ENCODE measurements at regions of chr4 and their contacts with region 1.

Region 1: DNA sequence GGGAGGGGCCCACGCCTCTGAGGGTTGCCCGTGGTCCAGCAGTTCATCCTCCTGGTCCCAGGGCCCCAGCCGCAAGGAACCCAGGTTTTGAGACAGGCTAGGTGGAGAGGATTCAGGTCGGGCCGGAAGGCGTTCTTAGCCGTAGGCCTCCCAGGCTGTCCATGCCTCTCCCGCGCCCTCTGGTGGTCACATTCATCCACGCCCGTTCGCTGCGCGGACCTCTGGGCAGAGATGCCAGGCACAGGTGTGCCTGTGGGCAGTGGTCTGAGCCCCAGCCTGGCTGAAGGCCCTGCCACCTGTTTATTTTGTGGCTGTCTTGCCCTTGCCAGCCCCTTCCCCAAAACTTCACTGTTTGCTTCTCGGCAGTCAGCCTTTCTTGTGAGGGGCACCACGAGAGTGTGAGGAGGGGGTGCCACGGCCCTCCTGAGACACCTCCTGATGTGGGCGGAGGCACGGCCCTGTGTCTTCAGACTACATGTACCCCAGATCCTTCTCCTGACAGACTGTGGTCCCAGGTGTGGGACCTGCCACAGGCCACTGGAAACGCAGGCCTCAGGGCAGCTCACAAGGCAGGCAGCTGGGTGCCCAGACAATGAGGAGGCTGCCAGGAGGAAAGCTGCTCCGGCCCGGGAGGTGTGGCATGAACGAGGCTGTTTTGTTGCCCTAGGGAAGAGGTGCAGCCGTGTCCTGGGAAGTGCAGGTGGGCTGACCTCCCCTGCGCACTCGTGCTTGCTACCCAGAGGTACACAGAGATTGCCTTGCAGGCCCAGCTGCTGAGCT is 5.0 kb downstream of the UVSSA start:
- DNase-seq: peak; percentile 51 to 99
- H3K4me3 ChIP-seq: no peak overlapping the region
- H3K27ac ChIP-seq: no peak overlapping the region
- H3K4me1 ChIP-seq: peaks cover 0 to 6% (median 2%) of the 10 kb centered on the region in 4 experiments; a peak in 2 of 7 replicates
- H3K27me3 ChIP-seq: no peaks in the 10 kb centered on the region
- CTCF ChIP-seq: peak in 2 of 3 experiments; percentile 88 to 98; a peak in 3 of 4 replicates
- EP300 ChIP-seq: no peak
- POLR2A ChIP-seq: no peak
- RAD21 ChIP-seq: peak; percentile 66 to 78

Region 2: DNA sequence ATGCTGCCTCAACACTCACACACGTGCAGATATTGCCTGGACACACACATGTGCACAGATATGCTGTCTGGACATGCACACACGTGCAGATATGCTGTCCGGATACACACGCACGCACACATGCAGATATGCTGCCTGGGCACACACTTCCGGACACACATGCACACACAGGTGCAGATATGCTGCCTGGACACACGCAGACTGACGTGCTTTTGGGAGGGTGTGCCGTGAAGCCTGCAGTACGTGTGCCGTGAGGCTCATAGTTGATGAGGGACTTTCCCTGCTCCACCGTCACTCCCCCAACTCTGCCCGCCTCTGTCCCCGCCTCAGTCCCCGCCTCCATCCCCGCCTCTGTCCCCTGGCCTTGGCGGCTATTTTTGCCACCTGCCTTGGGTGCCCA is 325.9 kb before region 1 on chr4:
- CTCF ChIA-PET with region 1: no interaction called
- POLR2A ChIA-PET with region 1: no interaction called
- DNase-seq: no peak
- H3K4me3 ChIP-seq: peak overlapping the region in 1 of 4 experiments; percentile 8; a peak in 1 of 8 replicates
- H3K27ac ChIP-seq: no peak overlapping the region
- H3K4me1 ChIP-seq: peaks cover 0 to 14% (median 4%) of the 10 kb centered on the region in 4 experiments; a peak in 4 of 7 replicates
- H3K27me3 ChIP-seq: 0 out of 7 replicates have a peak, but pooled peaks cover 0 to 5% (median 0%) of the 10 kb centered on the region in 4 experiments
- CTCF ChIP-seq: no peak
- EP300 ChIP-seq: no peak
- POLR2A ChIP-seq: no peak
- RAD21 ChIP-seq: no peak

Region 3: DNA sequence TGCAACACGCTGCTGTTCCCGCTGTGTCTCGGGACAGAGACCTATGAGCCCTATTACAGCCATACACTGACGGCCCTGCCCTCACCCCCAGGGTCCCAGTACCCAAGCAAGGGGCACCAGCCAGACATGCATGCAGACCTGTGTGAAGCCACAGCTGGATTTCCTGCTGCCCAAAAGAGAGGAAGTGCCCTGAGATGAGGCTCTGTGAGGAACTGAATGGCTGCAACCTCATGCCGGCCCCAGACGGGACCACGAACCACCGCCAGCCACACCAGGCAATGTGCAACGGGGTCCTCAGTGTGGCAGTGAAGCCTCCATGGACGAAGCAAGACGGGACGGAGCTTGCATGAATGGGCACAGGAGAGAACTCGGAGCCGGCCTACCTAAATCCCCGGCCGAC is 124.2 kb before region 1 on chr4:
- CTCF ChIA-PET with region 1: no interaction called
- POLR2A ChIA-PET with region 1: no interaction called
- DNase-seq: no peak
- H3K4me3 ChIP-seq: no peak overlapping the region
- H3K27ac ChIP-seq: no peak overlapping the region
- H3K4me1 ChIP-seq: no peaks in the 10 kb centered on the region
- H3K27me3 ChIP-seq: no peaks in the 10 kb centered on the region
- CTCF ChIP-seq: no peak
- EP300 ChIP-seq: no peak
- POLR2A ChIP-seq: no peak
- RAD21 ChIP-seq: no peak

Region 4: DNA sequence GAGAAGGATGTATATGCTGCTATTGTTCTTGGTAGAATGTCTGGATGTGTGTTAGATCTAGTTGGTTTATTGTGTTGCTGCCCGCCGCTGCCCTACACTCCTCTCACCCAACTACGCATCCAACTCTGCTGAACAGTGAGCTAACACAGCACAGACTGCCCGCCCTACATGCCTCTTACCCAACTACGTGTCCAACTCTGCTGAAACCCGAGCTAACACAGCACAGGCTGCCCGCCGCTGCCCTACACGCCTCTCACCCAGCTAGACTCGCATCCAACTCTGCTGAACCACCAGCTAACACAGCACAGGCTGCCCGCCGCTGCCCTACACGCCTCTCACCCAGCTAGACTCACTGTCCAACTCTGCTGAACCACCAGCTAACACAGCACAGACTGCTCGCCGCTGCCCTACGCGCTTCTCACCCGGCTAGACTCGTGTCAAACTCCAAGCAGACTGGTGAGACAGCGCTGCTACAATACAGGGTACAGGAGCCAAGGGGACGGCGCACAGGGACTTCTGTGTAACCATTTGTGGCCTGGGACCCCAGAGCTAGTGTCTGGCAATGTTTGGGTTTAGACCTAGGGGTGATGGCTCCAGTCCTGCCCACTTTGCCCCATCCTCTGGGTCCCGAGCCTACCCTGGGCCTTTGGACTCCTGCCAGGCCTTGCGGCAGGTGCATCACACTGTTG is 91.5 kb before region 1 on chr4:
- CTCF ChIA-PET with region 1: no interaction called
- POLR2A ChIA-PET with region 1: no interaction called
- DNase-seq: no peak
- H3K4me3 ChIP-seq: no peak overlapping the region
- H3K27ac ChIP-seq: no peak overlapping the region
- H3K4me1 ChIP-seq: peaks cover 0 to 2% (median 0%) of the 10 kb centered on the region in 4 experiments; a peak in 1 of 7 replicates
- H3K27me3 ChIP-seq: no peaks in the 10 kb centered on the region; a peak in 1 of 7 replicates
- CTCF ChIP-seq: no peak
- EP300 ChIP-seq: no peak
- POLR2A ChIP-seq: no peak
- RAD21 ChIP-seq: no peak

Region 5: DNA sequence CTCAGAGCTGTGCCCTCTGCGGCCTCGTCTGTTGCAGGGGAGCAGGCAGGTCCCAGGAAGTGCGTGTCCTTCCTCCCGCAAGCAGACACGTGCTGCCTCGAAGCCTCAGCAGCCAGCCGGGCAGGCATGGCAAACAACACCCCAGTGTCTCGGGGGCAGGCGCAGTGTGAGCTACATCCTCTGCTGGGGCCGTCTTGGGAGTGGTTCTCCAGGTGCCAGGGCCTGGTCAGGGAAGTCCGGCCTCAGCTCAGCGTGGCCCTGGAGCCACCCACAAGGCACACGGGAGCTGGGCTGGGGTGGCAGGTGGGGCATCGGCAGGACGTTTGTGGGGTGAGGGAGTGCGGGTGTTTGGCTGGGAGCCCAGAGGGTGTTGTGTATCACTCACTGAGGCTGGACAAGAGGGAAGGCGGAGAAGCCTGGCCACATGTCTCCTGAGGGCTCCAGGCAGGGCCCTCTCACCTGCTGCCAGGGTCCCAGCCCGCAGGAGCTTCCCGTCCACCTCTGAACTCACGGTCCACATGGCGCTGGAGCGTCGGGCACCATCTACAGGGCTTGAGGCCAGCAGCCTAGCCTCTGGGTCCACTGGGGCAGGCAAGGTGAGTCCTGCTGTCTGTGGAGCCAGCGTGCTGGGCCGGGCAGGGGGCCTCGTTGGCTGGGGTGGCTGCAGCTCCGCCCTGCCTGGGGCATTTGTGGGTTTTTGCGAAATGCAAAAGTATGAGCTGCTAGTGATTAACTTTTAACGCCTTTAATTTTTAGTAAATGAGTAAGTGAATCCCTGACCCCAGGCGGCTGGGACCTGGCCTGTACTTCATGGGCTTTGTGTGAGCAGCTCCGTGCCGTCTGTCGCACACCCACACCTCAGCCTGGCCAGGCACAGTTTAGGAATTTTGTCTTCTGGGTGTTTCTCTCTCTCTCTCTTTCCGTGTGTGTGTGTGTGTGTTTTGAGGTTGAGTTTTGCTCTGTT is 22.4 kb before region 1 on chr4:
- CTCF ChIA-PET with region 1: interaction called, 11 read pairs
- POLR2A ChIA-PET with region 1: interaction called, 5 read pairs
- DNase-seq: no peak
- H3K4me3 ChIP-seq: no peak overlapping the region
- H3K27ac ChIP-seq: no peak overlapping the region
- H3K4me1 ChIP-seq: no peaks in the 10 kb centered on the region
- H3K27me3 ChIP-seq: no peaks in the 10 kb centered on the region
- CTCF ChIP-seq: no peak
- EP300 ChIP-seq: no peak
- POLR2A ChIP-seq: no peak
- RAD21 ChIP-seq: no peak

Region 6: DNA sequence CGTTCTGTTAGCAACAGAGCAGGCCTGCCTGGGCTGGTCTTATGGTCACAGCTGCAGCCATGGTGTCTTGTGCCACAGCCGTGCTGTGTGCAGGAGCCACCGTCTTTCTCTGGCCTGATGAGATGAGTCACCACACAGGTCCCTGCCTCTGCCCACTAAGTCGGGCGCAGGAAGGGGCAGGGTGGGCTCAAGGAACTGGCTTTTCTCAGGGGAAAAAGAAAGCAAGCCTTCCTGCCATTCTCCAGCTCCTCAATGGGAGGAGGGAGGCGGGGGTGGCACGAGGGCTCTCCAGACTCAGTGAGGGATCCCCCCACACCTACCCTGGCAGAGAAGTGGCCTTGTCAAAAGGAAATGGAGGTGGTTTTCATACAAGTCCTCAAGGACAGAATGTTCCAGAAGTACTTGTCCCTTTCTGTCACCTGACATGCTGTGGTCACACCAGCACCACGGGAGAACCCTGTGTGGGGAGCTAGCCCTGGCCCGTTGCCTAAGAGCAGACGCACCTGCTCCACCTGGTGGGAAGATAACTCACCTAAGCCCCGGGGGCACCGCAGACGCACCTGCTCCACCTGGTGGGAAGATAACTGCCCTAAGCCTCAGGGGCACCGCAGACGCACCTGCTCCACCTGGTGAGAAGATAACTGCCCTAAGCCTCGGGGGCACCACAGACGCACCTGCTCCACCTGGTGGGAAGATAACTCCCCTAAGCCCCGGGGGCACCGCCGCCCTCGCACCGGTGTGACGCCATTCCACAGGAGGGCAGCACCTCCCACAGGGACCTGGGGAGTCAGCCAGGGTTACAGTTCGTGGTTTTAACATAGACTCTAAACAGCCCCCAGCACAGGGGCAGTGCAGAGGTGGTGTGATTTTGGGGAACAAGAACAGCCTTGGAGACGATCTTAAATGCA is 13.5 kb after region 1 on chr4:
- CTCF ChIA-PET with region 1: interaction called, 58 read pairs
- POLR2A ChIA-PET with region 1: interaction called, 4 read pairs
- DNase-seq: no peak
- H3K4me3 ChIP-seq: no peak overlapping the region
- H3K27ac ChIP-seq: no peak overlapping the region
- H3K4me1 ChIP-seq: peaks cover 0 to 2% (median 0%) of the 10 kb centered on the region in 4 experiments; a peak in 1 of 7 replicates
- H3K27me3 ChIP-seq: no peaks in the 10 kb centered on the region
- CTCF ChIP-seq: peak in 2 of 3 experiments; percentile 46 to 59; a peak in 3 of 4 replicates
- EP300 ChIP-seq: no peak
- POLR2A ChIP-seq: no peak
- RAD21 ChIP-seq: peak; percentile 12 to 32; a peak in 3 of 4 replicates

Region 7: GRCh38 chr4:1377226-1377605 is 25.2 kb after region 1 on chr4:
- CTCF ChIA-PET with region 1: interaction called, 15 read pairs
- POLR2A ChIA-PET with region 1: interaction called, 3 read pairs
- DNase-seq: no peak
- H3K4me3 ChIP-seq: no peak overlapping the region
- H3K27ac ChIP-seq: no peak overlapping the region
- H3K4me1 ChIP-seq: no peaks in the 10 kb centered on the region; a peak in 1 of 7 replicates
- H3K27me3 ChIP-seq: no peaks in the 10 kb centered on the region
- CTCF ChIP-seq: peak in 1 of 3 experiments; percentile 31; a peak in 2 of 4 replicates
- EP300 ChIP-seq: no peak
- POLR2A ChIP-seq: no peak
- RAD21 ChIP-seq: peak; percentile 43

Region 8: GRCh38 chr4:1401409-1402020 is 49.5 kb after region 1 on chr4:
- CTCF ChIA-PET with region 1: interaction called, 14 read pairs
- POLR2A ChIA-PET with region 1: no interaction called
- DNase-seq: no peak
- H3K4me3 ChIP-seq: no peak overlapping the region
- H3K27ac ChIP-seq: no peak overlapping the region
- H3K4me1 ChIP-seq: peaks cover 0 to 22% (median 3%) of the 10 kb centered on the region in 4 experiments; a peak in 5 of 7 replicates
- H3K27me3 ChIP-seq: peaks cover 59 to 66% (median 63%) of the 10 kb centered on the region in 4 experiments
- CTCF ChIP-seq: peak in 1 of 3 experiments; percentile 4; a peak in 2 of 4 replicates
- EP300 ChIP-seq: no peak
- POLR2A ChIP-seq: no peak
- RAD21 ChIP-seq: 0 out of 4 replicates have a peak, but pooled peaks of 1 of the 2 experiments have one; percentile 3

Region 9: DNA sequence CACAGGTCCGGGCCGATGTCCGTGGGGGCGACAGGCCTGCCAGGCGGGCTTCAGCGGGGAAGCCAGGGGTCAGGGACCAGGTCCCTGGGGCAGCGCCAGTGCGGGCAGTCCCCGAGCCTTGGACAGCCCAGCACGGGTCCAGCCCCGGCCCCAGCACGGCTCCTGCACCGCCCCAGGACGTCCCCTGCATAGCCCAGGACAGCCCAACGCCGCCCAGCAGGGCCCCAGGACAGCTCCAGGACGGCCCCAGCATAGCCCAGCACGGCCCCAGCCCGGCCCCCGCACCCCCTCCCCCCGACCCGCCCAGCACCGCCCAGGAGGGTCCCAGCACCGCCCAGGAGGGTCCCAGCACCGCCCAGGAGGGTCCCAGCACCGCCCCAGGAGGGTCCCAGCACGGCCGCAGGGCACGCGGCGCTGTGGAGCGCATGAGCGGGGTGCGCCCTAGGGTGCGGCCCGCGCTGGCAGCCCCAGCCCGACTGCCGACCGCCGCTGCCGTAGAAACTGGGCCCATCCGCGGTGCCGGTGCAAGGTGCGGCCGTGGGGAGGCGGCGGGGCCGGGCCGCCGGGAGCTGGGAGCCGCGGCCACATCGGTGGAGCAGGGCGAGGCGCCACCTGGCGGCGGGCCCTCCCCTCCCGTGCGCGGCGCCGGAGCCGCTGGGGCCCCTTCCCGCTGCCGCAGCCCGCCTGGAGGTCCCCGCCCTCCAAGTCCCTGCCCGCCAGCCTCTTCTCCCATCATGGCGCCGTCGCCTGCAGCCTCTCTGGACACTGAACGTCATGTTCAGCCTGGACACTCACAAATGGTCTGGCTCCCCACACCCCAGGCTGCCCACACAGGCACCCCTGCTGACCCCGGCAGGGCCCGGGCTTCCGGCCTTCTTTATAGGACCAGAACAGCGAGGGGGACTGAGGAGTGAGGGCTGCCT is 161.0 kb after region 1 on chr4:
- CTCF ChIA-PET with region 1: interaction called, 11 read pairs
- POLR2A ChIA-PET with region 1: no interaction called
- DNase-seq: peak in 1 of 2 experiments; percentile 88
- H3K4me3 ChIP-seq: peak overlapping the region; percentile 20 to 55 (median 28); a peak in 6 of 8 replicates
- H3K27ac ChIP-seq: no peak overlapping the region
- H3K4me1 ChIP-seq: peaks cover 0 to 4% (median 3%) of the 10 kb centered on the region in 4 experiments; a peak in 2 of 7 replicates
- H3K27me3 ChIP-seq: peaks cover 0 to 2% (median 0%) of the 10 kb centered on the region in 4 experiments; a peak in 1 of 7 replicates
- CTCF ChIP-seq: peak in 2 of 3 experiments; percentile 73 to 90; a peak in 3 of 4 replicates
- EP300 ChIP-seq: peak in 1 of 2 experiments; percentile 42; a peak in 1 of 3 replicates
- POLR2A ChIP-seq: no peak
- RAD21 ChIP-seq: peak; percentile 52 to 79

Region 10: GRCh38 chr4:1910643-1911042 is 558.6 kb after region 1 on chr4:
- CTCF ChIA-PET with region 1: no interaction called
- POLR2A ChIA-PET with region 1: no interaction called
- DNase-seq: peak; percentile 21 to 64
- H3K4me3 ChIP-seq: no peak overlapping the region
- H3K27ac ChIP-seq: peak overlapping the region; percentile 24; the same call in 1 of the 2 replicates
- H3K4me1 ChIP-seq: no peaks in the 10 kb centered on the region
- H3K27me3 ChIP-seq: no peaks in the 10 kb centered on the region
- CTCF ChIP-seq: peak; percentile 51 to 78 (median 68)
- EP300 ChIP-seq: no peak
- POLR2A ChIP-seq: no peak
- RAD21 ChIP-seq: peak; percentile 75

Measured in H1 (cell line).